ENCODE measurements at regions of chr6 and their contacts with region 1.

Region 1: DNA sequence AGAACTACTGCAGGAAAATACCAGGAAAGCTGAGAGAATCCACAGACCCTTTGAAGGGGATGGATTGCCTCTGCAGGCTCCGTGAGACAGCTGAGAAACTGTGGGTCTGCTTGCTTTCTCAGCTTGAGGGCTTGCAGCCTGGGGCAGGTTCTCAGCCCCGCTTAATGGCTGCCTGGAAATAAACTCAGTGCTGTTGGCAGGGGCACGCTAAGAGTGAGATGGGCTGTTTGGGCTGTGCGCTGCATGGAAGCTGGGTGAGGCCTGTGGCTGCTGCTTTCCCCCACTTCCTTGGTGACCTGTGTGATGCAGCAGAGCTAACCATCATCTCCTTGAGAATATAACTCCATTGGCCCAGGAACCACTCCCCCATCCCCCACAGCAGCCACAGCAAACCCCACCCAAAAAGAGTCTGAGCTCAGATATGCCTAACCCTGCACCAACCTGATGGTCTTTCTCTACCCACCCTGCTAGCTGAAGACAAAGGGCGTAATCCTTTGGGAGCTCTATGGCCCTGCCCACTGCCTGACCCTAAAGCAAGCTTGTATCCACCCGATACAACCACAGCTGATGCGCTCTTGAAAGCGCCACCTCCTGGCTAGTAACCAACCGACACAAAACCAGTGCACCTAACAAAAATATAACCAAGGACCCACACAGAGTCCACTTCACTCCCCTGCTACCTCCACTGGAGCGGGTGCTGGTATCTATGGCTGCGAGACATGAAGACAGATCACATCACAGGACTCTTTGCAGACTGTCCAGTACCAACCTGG is 800.6 kb upstream of the MAP3K7 start:
- DNase-seq: no peak
- H3K4me3 ChIP-seq: no peak overlapping the region
- H3K27ac ChIP-seq: no peak overlapping the region
- H3K4me1 ChIP-seq: no peaks in the 10 kb centered on the region
- H3K27me3 ChIP-seq: no peaks in the 10 kb centered on the region
- CTCF ChIP-seq: no peak

Region 2: DNA sequence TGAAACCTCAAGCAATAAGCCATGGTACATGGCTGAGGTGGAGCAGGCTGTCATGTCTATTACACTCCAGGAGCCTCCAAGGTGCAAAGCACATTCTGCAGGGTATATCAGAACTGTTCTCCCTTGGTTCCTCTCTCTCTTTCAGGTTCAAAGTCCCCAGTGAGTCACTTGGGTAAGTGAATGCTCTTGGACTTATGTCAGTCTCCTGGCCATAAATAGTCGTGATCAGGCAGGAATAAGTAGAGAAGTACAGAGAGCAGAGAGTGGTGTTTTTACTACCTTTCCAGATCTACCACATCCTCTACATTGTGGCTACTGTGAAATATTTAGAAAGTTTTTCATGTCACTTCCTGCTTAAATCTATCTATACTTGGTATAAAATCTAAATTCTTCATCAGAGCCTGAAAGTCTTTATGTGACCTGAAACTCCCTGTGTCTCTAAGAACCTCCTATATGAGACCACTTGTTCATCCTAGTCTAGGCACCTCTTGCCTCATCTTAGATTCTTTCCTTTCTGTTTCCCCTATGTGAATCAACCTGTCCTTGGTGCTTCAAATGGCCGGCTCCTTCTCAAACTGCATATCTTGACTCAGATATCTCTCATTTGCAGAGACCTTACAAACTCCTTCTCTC is 277.0 kb after region 1 on chr6:
- CTCF ChIA-PET with region 1: no interaction called
- POLR2A ChIA-PET with region 1: no interaction called
- intact Hi-C with region 1: no loop called
- DNase-seq: no peak
- H3K4me3 ChIP-seq: no peak overlapping the region
- H3K27ac ChIP-seq: no peak overlapping the region
- H3K4me1 ChIP-seq: no peaks in the 10 kb centered on the region
- H3K27me3 ChIP-seq: no peaks in the 10 kb centered on the region
- CTCF ChIP-seq: no peak

Region 3: GRCh38 chr6:91751526-91751925 is 364.1 kb after region 1 on chr6:
- CTCF ChIA-PET with region 1: interaction called, 10 read pairs
- POLR2A ChIA-PET with region 1: no interaction called
- intact Hi-C with region 1: no loop called
- DNase-seq: no peak
- H3K4me3 ChIP-seq: no peak overlapping the region
- H3K27ac ChIP-seq: no peak overlapping the region
- H3K4me1 ChIP-seq: no peaks in the 10 kb centered on the region
- H3K27me3 ChIP-seq: no peaks in the 10 kb centered on the region
- CTCF ChIP-seq: no peak

Measured in A673 (cell line).